HepG2 (cell line): ENCODE measurements at regions of chr20 and their contacts with region 1.

Region 1: GRCh38 chr20:11204926-11205768 is 531.3 kb upstream of the JAG1 start:
- DNase-seq: peak; percentile 71
- ATAC-seq: peak; percentile 98
- H3K4me3 ChIP-seq: no peak overlapping the region
- H3K27ac ChIP-seq: no peak overlapping the region
- H3K4me1 ChIP-seq: peaks cover 11% of the 10 kb centered on the region
- H3K27me3 ChIP-seq: no peaks in the 10 kb centered on the region
- CTCF ChIP-seq: peak; percentile 91
- EP300 ChIP-seq: no peak
- POLR2A ChIP-seq: no peak
- RAD21 ChIP-seq: peak; percentile 74

Region 2: GRCh38 chr20:10476319-10476724 is 728.8 kb before region 1 on chr20:
- CTCF ChIA-PET with region 1: no interaction called
- POLR2A ChIA-PET with region 1: no interaction called
- in situ Hi-C with region 1: no loop called
- intact Hi-C with region 1: loop called (anchors 5 kb)
- DNase-seq: no peak
- ATAC-seq: no peak
- H3K4me3 ChIP-seq: no peak overlapping the region
- H3K27ac ChIP-seq: no peak overlapping the region
- H3K4me1 ChIP-seq: peaks cover 14% of the 10 kb centered on the region
- H3K27me3 ChIP-seq: no peaks in the 10 kb centered on the region
- CTCF ChIP-seq: no peak
- EP300 ChIP-seq: no peak
- POLR2A ChIP-seq: no peak
- RAD21 ChIP-seq: no peak

Region 3: GRCh38 chr20:10611357-10611756 is 593.8 kb before region 1 on chr20:
- CTCF ChIA-PET with region 1: no interaction called
- POLR2A ChIA-PET with region 1: no interaction called
- in situ Hi-C with region 1: no loop called
- intact Hi-C with region 1: loop called (anchors 1 kb)
- DNase-seq: peak; percentile 44
- ATAC-seq: peak; percentile 97
- H3K4me3 ChIP-seq: no peak overlapping the region
- H3K27ac ChIP-seq: no peak overlapping the region
- H3K4me1 ChIP-seq: peaks cover under 1% of the 10 kb centered on the region
- H3K27me3 ChIP-seq: no peaks in the 10 kb centered on the region
- CTCF ChIP-seq: peak; percentile 83
- EP300 ChIP-seq: peak in 1 of 2 experiments; percentile 15; a peak in 1 of 4 replicates
- POLR2A ChIP-seq: no peak
- RAD21 ChIP-seq: peak; percentile 57

Region 4: DNA sequence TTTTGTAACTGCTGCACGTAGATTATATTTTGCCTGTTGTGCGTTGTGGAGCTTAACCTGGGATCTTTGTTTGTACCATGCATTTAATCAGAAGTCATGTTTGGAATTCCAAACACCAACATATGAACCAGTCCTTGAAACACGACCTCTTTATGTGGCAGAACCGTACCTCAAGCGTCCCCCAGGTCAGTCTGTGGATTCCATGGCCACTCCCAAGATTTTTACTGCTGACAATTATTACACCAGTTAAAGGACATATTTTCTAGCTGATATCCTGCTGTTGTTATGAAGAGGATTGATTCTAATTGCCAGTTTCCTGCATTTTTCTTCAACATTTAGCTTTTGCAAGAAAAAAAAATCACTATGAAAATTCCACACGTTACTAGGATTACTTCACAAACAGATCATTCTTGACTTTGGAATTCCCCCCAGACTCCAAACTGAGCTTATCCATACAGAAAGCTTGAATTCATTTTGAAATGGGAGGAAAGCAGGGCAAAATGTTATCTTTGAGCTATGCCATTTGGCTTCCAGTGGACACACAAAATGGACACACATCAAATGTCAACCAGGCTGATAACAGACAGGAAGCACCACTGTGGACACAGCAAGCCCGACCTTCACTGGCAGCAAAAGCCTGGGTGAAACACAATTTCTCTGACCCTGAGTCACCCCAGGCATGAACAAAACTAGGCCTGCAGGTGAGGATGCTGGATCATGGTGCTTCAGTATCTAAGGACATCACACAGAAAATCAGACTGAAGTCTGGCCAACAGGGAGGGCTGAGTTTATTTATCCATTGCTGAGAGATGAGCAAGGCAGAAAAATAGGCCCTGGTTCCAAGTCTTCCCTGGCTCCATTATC is 11.5 kb after region 1 on chr20:
- CTCF ChIA-PET with region 1: no interaction called
- POLR2A ChIA-PET with region 1: no interaction called
- in situ Hi-C with region 1: no loop called
- intact Hi-C with region 1: loop called (anchors 1 kb)
- DNase-seq: peak; percentile 78
- ATAC-seq: peak; percentile 78
- H3K4me3 ChIP-seq: no peak overlapping the region
- H3K27ac ChIP-seq: no peak overlapping the region
- H3K4me1 ChIP-seq: peaks cover 17% of the 10 kb centered on the region
- H3K27me3 ChIP-seq: peaks cover 0 to 4% of the 10 kb centered on the region in 2 experiments; a peak in 1 of 5 replicates
- CTCF ChIP-seq: no peak
- EP300 ChIP-seq: no peak
- POLR2A ChIP-seq: no peak
- RAD21 ChIP-seq: no peak